HEK293 (cell line): ENCODE measurements at regions of chr2 and their contacts with region 1.

Region 1: DNA sequence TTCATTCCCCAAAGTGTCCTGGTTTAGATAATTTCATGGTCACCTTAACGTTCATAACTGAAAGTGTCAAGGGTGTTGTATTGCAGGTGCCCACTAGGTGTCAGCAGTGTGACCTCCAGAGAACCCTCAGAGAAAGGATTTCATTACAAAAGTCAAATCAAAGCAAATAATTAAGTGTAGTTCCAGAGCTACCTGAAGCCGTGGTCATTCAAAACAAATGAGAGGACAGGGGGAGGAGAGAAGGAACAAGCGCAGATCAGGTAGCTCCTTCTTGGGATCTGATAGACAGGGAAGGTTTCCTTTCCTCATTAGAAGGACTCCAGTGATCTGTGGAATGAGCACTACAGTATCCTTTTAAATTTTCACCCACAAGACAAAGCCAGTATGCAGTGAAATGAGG is at the start of gene SLC9A4:
- H3K4me3 ChIP-seq: no peak within 1 kb of the TSS
- H3K27ac ChIP-seq: no peak within 1 kb of the TSS
- H3K4me1 ChIP-seq: no peaks in the 10 kb centered on the region
- CTCF ChIP-seq: peak; percentile 56; the same call in 1 of the 2 replicates

Region 2: DNA sequence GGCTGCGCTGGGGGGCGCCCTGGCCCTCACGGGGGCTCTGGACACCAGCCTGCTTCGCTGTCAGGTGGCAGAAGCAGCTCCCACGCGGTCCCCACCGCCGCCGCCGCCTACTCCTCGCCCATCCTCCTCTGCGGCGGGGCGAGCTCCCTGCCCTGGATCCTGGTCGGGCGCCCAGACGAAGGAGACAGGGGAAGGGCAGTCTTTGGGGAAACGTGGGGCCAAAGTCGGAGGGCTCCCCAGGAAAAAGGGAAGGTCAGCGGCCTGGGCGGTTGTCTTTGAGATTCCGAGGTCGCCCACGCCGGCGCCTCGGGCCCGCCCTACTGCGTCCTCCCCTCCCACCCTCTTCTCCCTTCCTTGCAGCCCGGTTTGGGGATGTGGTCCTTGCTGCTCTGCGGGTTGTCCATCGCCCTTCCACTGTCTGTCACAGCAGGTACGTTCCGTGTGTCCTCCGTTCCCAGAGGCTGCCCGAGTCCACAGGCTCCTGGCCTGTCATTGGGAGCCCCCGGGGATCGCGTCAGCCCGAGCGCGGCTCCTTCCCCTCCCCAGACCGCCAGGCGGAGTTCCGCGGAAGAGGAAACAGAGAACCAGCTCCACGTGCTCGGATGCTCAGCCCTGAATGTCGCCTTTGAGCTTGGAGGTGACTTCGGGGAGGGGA is 285.4 kb before region 1 on chr2:
- CTCF ChIA-PET with region 1: no interaction called
- POLR2A ChIA-PET with region 1: no interaction called
- H3K4me3 ChIP-seq: no peak overlapping the region
- H3K27ac ChIP-seq: no peak overlapping the region
- H3K4me1 ChIP-seq: no peaks in the 10 kb centered on the region
- CTCF ChIP-seq: no peak

Region 3: DNA sequence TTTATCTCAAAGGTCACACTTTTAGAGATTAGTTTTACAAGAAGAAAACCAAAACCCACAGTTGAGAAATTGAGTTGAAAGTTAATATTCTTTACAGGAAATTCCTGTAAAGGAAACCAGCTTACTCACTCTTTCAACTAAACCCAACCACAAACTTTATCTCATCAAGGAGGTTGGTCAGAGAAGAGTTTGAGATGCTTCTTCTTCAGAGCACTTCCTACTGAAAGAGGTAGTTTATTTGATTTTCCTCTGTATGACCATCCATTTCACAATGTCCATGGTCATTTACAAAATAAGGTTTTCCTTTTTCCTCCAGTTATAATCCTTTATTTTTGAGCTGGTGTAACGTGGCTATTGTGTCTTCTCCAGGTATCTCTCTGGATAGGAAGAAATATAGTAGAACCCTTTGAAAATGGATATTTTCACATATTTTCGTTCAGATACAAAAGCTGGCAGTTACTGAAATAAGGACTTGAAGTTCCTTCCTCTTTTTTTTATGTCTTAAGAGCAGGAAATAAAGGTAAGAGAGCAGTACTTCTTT is 54.5 kb before region 1 on chr2:
- CTCF ChIA-PET with region 1: no interaction called
- POLR2A ChIA-PET with region 1: no interaction called
- H3K4me3 ChIP-seq: no peak overlapping the region
- H3K27ac ChIP-seq: no peak overlapping the region
- H3K4me1 ChIP-seq: no peaks in the 10 kb centered on the region
- CTCF ChIP-seq: no peak

Region 4: GRCh38 chr2:102428573-102428972 is 44.4 kb before region 1 on chr2:
- CTCF ChIA-PET with region 1: no interaction called
- POLR2A ChIA-PET with region 1: no interaction called
- H3K4me3 ChIP-seq: no peak overlapping the region
- H3K27ac ChIP-seq: no peak overlapping the region
- H3K4me1 ChIP-seq: no peaks in the 10 kb centered on the region
- CTCF ChIP-seq: no peak

Region 5: GRCh38 chr2:102461188-102461587 is 11.8 kb before region 1 on chr2:
- CTCF ChIA-PET with region 1: interaction called, 27 read pairs
- POLR2A ChIA-PET with region 1: no interaction called
- H3K4me3 ChIP-seq: no peak overlapping the region
- H3K27ac ChIP-seq: no peak overlapping the region
- H3K4me1 ChIP-seq: no peaks in the 10 kb centered on the region
- CTCF ChIP-seq: no peak

Region 6: DNA sequence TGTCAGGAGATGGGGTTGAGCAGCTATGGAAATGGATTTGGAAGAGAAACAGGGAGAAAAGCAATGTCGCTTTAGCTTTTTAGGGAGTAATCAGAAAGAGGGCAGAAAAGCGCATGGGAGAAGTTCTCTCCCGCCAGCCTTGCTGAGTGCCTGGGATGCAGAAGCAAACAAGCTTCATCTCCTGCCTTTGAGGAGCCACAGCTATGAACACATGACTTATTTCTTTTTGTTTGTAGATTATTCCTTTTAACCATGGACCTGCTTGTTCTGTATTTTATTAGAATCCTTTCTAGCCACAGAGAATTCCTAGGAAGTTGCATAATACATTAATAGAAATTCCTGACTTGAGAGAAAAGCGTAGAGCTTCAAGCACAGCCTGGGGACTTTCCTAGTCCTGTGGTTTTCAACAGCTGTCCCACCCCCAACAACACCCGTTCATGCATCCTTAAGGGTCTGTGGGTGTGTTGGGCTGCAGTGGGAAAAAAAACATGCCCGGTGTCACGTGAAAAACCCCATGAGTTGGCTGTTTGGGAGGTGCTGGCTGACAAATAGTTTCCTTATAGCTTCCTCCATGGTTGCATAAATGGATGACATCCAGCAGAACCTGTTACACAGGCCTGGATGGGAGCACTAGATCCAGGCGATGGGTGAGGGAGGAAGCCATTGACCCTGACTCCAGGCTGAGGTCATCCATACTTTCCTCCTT is 14.9 kb after region 1 on chr2:
- CTCF ChIA-PET with region 1: interaction called, 23 read pairs
- POLR2A ChIA-PET with region 1: no interaction called
- H3K4me3 ChIP-seq: no peak overlapping the region
- H3K27ac ChIP-seq: no peak overlapping the region
- H3K4me1 ChIP-seq: no peaks in the 10 kb centered on the region
- CTCF ChIP-seq: no peak

Region 7: DNA sequence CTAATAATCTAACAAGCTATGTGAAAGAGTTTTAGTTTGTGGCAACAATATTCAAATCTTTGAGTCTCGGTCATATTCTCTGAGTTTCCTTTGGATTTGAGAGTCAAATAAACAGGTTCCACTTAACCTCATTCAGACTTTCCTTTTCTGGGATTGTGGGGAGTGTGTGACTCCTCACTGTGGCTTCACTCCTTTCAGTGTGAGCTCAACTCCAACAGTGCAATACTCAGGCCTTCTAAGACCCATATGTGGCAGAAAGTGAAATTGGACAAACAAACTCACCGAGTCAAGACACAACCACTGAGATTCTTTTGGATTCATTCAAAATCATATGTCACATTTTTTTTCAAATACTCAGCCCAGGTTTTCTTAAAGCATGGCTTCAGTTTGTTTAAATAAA is 25.4 kb after region 1 on chr2:
- CTCF ChIA-PET with region 1: interaction called, 10 read pairs
- POLR2A ChIA-PET with region 1: no interaction called
- H3K4me3 ChIP-seq: no peak overlapping the region
- H3K27ac ChIP-seq: no peak overlapping the region
- H3K4me1 ChIP-seq: no peaks in the 10 kb centered on the region
- CTCF ChIP-seq: no peak

Region 8: GRCh38 chr2:102514061-102514785 is 41.2 kb after region 1 on chr2:
- CTCF ChIA-PET with region 1: interaction called, 10 read pairs
- POLR2A ChIA-PET with region 1: no interaction called
- H3K4me3 ChIP-seq: no peak overlapping the region
- H3K27ac ChIP-seq: no peak overlapping the region
- H3K4me1 ChIP-seq: no peaks in the 10 kb centered on the region
- CTCF ChIP-seq: no peak

Region 9: DNA sequence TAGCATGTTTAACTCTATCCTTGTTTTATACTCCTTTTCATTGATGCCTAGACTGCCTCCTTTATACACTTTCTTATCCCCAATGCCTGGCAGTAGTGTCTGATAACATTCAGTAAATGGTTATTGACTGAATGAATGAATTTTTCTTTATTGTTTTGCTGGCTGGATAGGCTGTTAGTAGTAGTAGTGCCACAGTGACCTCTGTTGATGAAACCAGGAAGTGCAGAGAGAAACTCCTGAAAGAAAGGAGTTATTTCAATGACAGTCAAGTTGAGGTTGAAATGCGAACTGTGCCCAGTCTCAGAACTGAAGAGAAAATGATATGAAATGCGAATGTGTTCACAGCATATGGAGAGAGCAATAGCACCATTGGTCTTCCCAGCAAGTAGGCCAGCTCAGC is 119.6 kb after region 1 on chr2:
- CTCF ChIA-PET with region 1: interaction called, 30 read pairs
- POLR2A ChIA-PET with region 1: no interaction called
- H3K4me3 ChIP-seq: no peak overlapping the region
- H3K27ac ChIP-seq: no peak overlapping the region
- H3K4me1 ChIP-seq: no peaks in the 10 kb centered on the region
- CTCF ChIP-seq: no peak

Region 10: DNA sequence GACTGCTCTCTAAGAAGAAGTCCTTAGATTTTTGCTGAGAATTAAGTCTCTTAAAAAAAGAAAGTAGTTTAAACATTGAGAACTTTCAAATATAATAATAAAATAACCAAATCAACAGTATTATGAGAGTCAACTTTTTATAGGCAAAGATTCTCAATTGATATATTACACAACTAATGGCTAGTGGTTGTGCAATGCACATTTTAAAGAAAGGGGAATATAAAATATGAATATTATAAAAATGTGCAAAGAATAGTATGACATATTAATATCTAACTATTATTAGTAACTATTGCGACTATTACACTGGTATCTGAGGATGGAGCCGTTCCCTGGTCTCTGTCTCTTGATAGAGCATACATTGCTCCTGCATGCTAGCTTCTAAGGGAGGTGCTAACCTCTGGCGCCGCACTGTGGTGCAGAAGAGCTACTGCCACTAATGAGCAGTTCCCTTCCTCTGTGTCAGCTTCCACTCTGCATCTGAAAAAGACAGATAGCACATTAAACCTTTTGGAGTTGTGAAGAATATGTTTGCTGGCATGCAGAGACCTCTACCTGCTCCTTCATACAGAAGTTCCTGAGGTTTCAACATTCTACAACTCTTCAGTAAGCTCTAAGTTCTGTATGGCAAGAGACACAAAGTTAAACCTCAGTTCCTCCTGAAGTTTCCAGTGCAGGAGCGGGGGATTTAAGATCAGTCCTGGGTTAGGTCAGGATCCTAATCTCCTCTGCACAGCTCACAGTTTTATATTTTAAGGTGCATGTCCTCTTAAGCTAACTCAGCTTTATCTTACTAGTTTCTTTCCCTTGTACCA is 142.8 kb after region 1 on chr2:
- CTCF ChIA-PET with region 1: interaction called, 76 read pairs
- POLR2A ChIA-PET with region 1: no interaction called
- H3K4me3 ChIP-seq: no peak overlapping the region
- H3K27ac ChIP-seq: no peak overlapping the region
- H3K4me1 ChIP-seq: no peaks in the 10 kb centered on the region
- CTCF ChIP-seq: 0 out of 2 replicates have a peak, but pooled peaks have one; percentile 36